Heart left ventricle (tissue), 16 donors: ENCODE measurements at regions of chr7 and their contacts with region 1.

Region 1: DNA sequence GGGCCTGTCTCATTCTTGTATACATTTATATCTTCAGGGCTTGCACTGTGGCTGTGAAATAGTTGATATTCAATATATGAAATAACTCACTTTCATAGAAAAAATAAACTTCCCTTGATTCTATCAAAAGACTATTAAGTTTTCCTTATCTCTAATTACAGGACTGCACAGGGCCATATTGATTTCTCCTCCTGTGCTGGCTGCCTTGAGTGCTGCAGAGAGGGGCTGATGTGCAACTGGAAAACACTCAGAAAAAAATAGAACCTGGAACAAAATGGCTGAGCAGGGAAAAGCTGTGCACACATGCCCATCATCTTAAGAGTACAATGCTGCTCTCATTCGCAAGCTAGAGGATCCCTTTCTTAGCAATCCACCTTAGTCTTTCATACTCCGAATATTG is 5.9 kb upstream of the HDAC9 start:
- DNase-seq: no peak
- ATAC-seq: no peak
- H3K4me3 ChIP-seq: no peak overlapping the region
- H3K27ac ChIP-seq: no peak overlapping the region
- H3K4me1 ChIP-seq: peaks cover 0 to 18% (median 4%) of the 10 kb centered on the region in 12 donors
- H3K27me3 ChIP-seq: no peaks in the 10 kb centered on the region
- CTCF ChIP-seq: no peak
- POLR2A ChIP-seq: no peak

Region 2: DNA sequence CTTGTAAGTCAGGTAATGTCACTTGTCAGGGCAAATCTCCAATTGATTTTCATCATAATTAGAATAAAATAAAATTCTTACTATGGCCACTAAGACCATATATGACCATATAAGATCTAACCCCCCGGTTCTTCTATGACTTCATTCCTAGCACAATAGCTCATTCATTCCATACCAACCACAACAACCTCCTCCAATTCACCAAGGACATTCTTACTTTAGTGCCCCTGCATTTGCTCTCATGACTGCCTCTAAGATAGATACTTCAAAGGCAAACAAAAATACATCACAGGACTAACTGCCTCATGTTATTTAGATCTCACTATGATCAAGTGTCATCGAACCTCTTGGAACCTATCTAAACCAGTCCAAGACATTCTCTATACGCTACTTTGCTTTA is 640.1 kb before region 1 on chr7:
- intact Hi-C with region 1: no loop called
- DNase-seq: no peak
- ATAC-seq: peak in 1 of 4 donors; percentile 44
- H3K4me3 ChIP-seq: no peak overlapping the region
- H3K27ac ChIP-seq: no peak overlapping the region
- H3K4me1 ChIP-seq: peaks cover 0 to 4% (median 0%) of the 10 kb centered on the region in 12 donors
- H3K27me3 ChIP-seq: no peaks in the 10 kb centered on the region
- CTCF ChIP-seq: peak in 1 of 12 donors; percentile 7
- POLR2A ChIP-seq: no peak

Region 3: GRCh38 chr7:18361756-18362155 is 127.9 kb before region 1 on chr7:
- intact Hi-C with region 1: loop called in 3 of 10 experiments (anchors 2 to 10 kb)
- DNase-seq: no peak
- ATAC-seq: no peak
- H3K4me3 ChIP-seq: no peak overlapping the region
- H3K27ac ChIP-seq: no peak overlapping the region
- H3K4me1 ChIP-seq: peaks cover 0 to 2% (median 0%) of the 10 kb centered on the region in 12 donors
- H3K27me3 ChIP-seq: no peaks in the 10 kb centered on the region
- CTCF ChIP-seq: no peak
- POLR2A ChIP-seq: no peak

Region 4: DNA sequence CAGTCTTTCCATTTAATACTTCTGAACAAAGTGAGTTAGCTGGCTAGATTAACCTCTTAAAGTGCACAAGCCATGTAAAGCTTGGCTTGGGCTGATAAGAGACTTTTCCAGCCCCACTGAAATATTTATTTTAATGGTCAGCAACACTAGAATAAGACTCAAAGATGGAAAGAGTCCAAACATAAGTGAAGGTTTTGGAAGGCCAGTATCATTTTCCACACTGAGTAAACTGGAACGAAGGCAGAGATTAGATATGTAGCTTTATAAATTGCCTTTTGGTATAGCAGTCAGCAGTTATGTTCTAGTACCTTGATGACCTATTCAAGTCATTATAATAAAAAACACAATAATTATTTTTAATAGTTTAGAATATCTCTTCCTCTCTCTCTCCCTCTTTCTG is 108.1 kb after region 1 on chr7:
- intact Hi-C with region 1: no loop called
- DNase-seq: no peak
- ATAC-seq: peak; percentile 49 to 73 (median 68)
- H3K4me3 ChIP-seq: no peak overlapping the region
- H3K27ac ChIP-seq: peak overlapping the region in 5 of 12 donors; percentile 13 to 62 (median 43)
- H3K4me1 ChIP-seq: peaks cover 0 to 14% (median 0%) of the 10 kb centered on the region in 12 donors
- H3K27me3 ChIP-seq: no peaks in the 10 kb centered on the region
- CTCF ChIP-seq: no peak
- POLR2A ChIP-seq: no peak